Sigmoid colon (tissue), 7 donors: ENCODE measurements at regions of chr12 and their contacts with region 1.

Region 1: GRCh38 chr12:127083008-127083949 is 1183.7 kb upstream of the TMEM132C start:
- DNase-seq: no peak
- H3K4me3 ChIP-seq: peak overlapping the region; percentile 25 to 49 (median 42)
- H3K27ac ChIP-seq: peak overlapping the region in 3 of 4 donors; percentile 28 to 62 (median 60)
- H3K4me1 ChIP-seq: peaks cover 0 to 5% (median 0%) of the 10 kb centered on the region in 4 donors
- H3K27me3 ChIP-seq: no peaks in the 10 kb centered on the region
- CTCF ChIP-seq: no peak
- EP300 ChIP-seq: no peak
- POLR2A ChIP-seq: no peak

Region 2: DNA sequence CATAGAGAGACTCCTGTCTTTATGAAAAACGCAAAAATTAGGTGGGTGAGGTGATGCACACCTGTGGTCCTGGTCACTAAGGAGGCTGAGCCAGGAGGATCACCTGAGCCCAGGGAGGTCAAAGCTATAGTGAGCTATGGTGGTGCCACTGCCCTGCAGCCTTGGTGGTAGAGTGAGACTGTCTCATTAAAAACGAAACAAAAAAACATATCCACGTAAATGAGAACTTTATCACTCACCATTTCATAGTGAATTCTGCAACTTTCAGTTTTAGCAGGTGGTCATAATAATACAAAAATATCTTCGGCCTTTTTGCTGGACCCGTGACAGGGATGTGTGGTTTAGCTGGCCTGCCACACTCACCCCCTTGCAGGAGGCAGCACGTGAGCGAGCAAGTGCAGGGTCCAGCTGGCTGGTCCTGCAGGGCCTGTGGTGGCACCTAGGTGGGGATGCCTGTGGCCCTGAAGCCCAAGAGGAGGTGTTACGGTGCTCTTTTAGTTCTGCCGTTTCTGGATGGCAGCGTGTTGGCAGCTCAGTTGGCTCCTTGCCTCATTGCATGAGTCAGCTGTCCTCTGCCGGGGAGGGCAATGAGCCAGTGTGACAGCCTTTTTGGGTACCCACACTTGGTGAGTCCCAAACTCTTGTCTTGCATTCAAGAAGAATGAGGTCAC is 147.0 kb before region 1 on chr12:
- intact Hi-C with region 1: loop called (anchors 10 kb)
- DNase-seq: peak; percentile 87
- H3K4me3 ChIP-seq: no peak overlapping the region
- H3K27ac ChIP-seq: peak overlapping the region in 2 of 4 donors; percentile 46 to 56
- H3K4me1 ChIP-seq: peaks cover 0 to 15% (median 7%) of the 10 kb centered on the region in 4 donors
- H3K27me3 ChIP-seq: no peaks in the 10 kb centered on the region
- CTCF ChIP-seq: no peak
- EP300 ChIP-seq: no peak
- POLR2A ChIP-seq: no peak

Region 3: GRCh38 chr12:127060310-127060847 is 22.9 kb before region 1 on chr12:
- intact Hi-C with region 1: no loop called
- DNase-seq: no peak
- H3K4me3 ChIP-seq: peak overlapping the region in 2 of 4 donors; percentile 3 to 9
- H3K27ac ChIP-seq: no peak overlapping the region
- H3K4me1 ChIP-seq: no peaks in the 10 kb centered on the region
- H3K27me3 ChIP-seq: no peaks in the 10 kb centered on the region
- CTCF ChIP-seq: no peak
- EP300 ChIP-seq: no peak
- POLR2A ChIP-seq: peak in 1 of 2 donors; percentile 43

Region 4: GRCh38 chr12:127539226-127539858 is 456.1 kb after region 1 on chr12:
- intact Hi-C with region 1: no loop called
- DNase-seq: no peak
- H3K4me3 ChIP-seq: no peak overlapping the region
- H3K27ac ChIP-seq: no peak overlapping the region
- H3K4me1 ChIP-seq: no peaks in the 10 kb centered on the region
- H3K27me3 ChIP-seq: no peaks in the 10 kb centered on the region
- CTCF ChIP-seq: no peak
- EP300 ChIP-seq: no peak
- POLR2A ChIP-seq: no peak